Naive thymus-derived CD4-positive, alpha-beta T cell (primary cell): ENCODE measurements at regions of chr14 and their contacts with region 1.

Region 1: GRCh38 chr14:49786315-49787110 is 18.6 kb downstream of the KLHDC2 start:
- DNase-seq: no peak
- ATAC-seq: no peak
- H3K4me3 ChIP-seq: no peak overlapping the region
- H3K4me3 Mint-ChIP-seq: no peak overlapping the region
- H3K27ac ChIP-seq: no peak overlapping the region
- H3K27ac Mint-ChIP-seq: peak overlapping the region in 6 of 9 donors; percentile 2 to 62 (median 27)
- H3K4me1 ChIP-seq: no peaks in the 10 kb centered on the region
- H3K4me1 Mint-ChIP-seq: peaks cover 0 to 9% (median 0%) of the 10 kb centered on the region in 7 donors
- H3K27me3 ChIP-seq: no peaks in the 10 kb centered on the region
- H3K27me3 Mint-ChIP-seq: no peaks in the 10 kb centered on the region

Region 2: GRCh38 chr14:49294621-49295148 is 491.8 kb before region 1 on chr14:
- CTCF ChIA-PET with region 1: no interaction called
- POLR2A ChIA-PET with region 1: no interaction called
- intact Hi-C with region 1: no loop called
- DNase-seq: no peak
- ATAC-seq: no peak
- H3K4me3 ChIP-seq: no peak overlapping the region
- H3K4me3 Mint-ChIP-seq: no peak overlapping the region
- H3K27ac ChIP-seq: no peak overlapping the region
- H3K27ac Mint-ChIP-seq: no peak overlapping the region
- H3K4me1 ChIP-seq: no peaks in the 10 kb centered on the region
- H3K4me1 Mint-ChIP-seq: no peaks in the 10 kb centered on the region
- H3K27me3 ChIP-seq: no peaks in the 10 kb centered on the region
- H3K27me3 Mint-ChIP-seq: peaks cover 0 to 16% (median 8%) of the 10 kb centered on the region in 5 donors

Region 3: GRCh38 chr14:49828640-49829039 is 42.1 kb after region 1 on chr14:
- CTCF ChIA-PET with region 1: no interaction called
- POLR2A ChIA-PET with region 1: no interaction called
- intact Hi-C with region 1: loop called (anchors 5 to 10 kb)
- DNase-seq: no peak
- ATAC-seq: no peak
- H3K4me3 ChIP-seq: no peak overlapping the region
- H3K4me3 Mint-ChIP-seq: no peak overlapping the region
- H3K27ac ChIP-seq: no peak overlapping the region
- H3K27ac Mint-ChIP-seq: peak overlapping the region in 1 of 9 donors; percentile 65
- H3K4me1 ChIP-seq: no peaks in the 10 kb centered on the region
- H3K4me1 Mint-ChIP-seq: peaks cover 0 to 24% (median 10%) of the 10 kb centered on the region in 7 donors
- H3K27me3 ChIP-seq: no peaks in the 10 kb centered on the region
- H3K27me3 Mint-ChIP-seq: no peaks in the 10 kb centered on the region